Esophagus squamous epithelium (tissue), 5 donors: ENCODE measurements at regions of chr1 and their contacts with region 1.

Region 1: GRCh38 chr1:218345673-218346390 is 696 bp downstream of the TGFB2 start:
- DNase-seq: no peak
- H3K4me3 ChIP-seq: peak overlapping the region; percentile 44 to 69 (median 61)
- H3K27ac ChIP-seq: peak overlapping the region; percentile 45 to 86 (median 82)
- H3K4me1 ChIP-seq: peaks cover 0 to 61% (median 0%) of the 10 kb centered on the region in 3 donors
- H3K27me3 ChIP-seq: peaks cover 0 to 12% (median 0%) of the 10 kb centered on the region in 4 donors
- CTCF ChIP-seq: no peak
- POLR2A ChIP-seq: peak in 2 of 4 donors; percentile 28 to 33

Region 2: GRCh38 chr1:218401998-218402785 is 56.4 kb after region 1 on chr1:
- intact Hi-C with region 1: no loop called
- DNase-seq: no peak
- H3K4me3 ChIP-seq: no peak overlapping the region
- H3K27ac ChIP-seq: peak overlapping the region in 3 of 4 donors; percentile 55 to 79 (median 60)
- H3K4me1 ChIP-seq: peaks cover 0 to 17% (median 0%) of the 10 kb centered on the region in 3 donors
- H3K27me3 ChIP-seq: no peaks in the 10 kb centered on the region
- CTCF ChIP-seq: no peak
- POLR2A ChIP-seq: no peak

Region 3: DNA sequence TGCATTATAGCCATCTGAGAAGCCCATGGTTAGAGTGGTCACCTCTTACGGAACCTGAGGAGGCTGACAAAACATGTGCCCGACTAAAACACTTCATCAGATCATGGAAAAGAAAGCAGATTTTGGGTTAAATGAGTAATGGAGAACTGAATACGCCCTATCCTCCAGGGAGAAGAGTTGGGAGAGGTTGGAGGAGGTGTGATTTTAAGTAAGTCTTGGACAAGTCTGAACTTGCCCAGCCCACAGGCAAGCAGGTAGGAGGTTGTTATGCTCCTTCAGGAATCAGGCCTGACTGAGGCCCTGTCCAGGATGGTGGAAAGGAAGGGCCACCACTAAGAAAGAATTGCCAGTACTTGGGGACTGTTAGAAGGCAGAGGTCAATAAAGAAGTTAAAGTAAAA is 255.1 kb after region 1 on chr1:
- intact Hi-C with region 1: no loop called
- DNase-seq: no peak
- H3K4me3 ChIP-seq: no peak overlapping the region
- H3K27ac ChIP-seq: peak overlapping the region in 2 of 4 donors; percentile 2 to 16
- H3K4me1 ChIP-seq: peaks cover 0 to 12% (median 0%) of the 10 kb centered on the region in 3 donors
- H3K27me3 ChIP-seq: no peaks in the 10 kb centered on the region
- CTCF ChIP-seq: no peak
- POLR2A ChIP-seq: no peak

Region 4: GRCh38 chr1:219066631-219067349 is 721.0 kb after region 1 on chr1:
- intact Hi-C with region 1: loop called (anchors 10 kb)
- DNase-seq: no peak
- H3K4me3 ChIP-seq: no peak overlapping the region
- H3K27ac ChIP-seq: no peak overlapping the region
- H3K4me1 ChIP-seq: peaks cover 0 to 6% (median 0%) of the 10 kb centered on the region in 3 donors
- H3K27me3 ChIP-seq: no peaks in the 10 kb centered on the region
- CTCF ChIP-seq: peak in 5 of 6 experiments; percentile 13 to 60 (median 45)
- POLR2A ChIP-seq: no peak